Calu3 (cell line): ENCODE measurements at regions of chr3 and their contacts with region 1.

Region 1: GRCh38 chr3:187679638-187680396 is 9.6 kb upstream of the SST start:
- DNase-seq: peak; percentile 90
- H3K4me3 Mint-ChIP-seq: no peak overlapping the region
- H3K27ac Mint-ChIP-seq: peak overlapping the region; percentile 25
- H3K4me1 Mint-ChIP-seq: peaks cover 15% of the 10 kb centered on the region
- H3K27me3 Mint-ChIP-seq: peaks cover 62% of the 10 kb centered on the region
- CTCF ChIP-seq: peak; percentile 98

Region 2: DNA sequence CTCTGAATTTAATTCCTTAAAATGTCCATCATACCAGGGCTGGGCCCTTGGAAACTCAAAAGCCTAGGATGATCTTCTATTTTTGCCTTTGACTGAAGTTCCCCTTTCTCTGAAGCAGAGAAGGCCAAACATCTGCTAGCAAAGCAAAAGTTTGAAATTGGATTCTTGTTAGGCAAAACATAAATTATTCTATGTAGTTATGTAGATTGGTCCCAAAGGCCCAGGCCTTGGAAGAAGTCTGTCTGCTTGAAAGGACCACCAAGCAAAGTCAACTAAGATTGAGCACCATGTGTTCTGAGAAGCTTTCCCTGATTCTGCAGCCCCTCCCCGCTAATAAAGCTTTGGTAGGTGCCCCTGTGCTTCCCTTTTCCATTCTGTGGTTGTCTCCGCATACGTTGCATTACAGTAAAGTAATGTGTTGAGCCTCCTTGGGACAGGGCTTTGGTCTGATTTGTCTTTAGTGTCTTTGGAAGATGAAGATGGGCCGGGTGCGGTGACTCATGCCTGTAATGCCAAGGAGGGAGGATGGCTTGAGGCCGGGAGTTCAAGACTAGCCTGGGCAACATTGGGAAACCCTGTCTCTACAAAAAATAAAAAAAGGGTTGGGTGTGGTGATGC is 597.0 kb before region 1 on chr3:
- CTCF ChIA-PET with region 1: interaction called, 11 read pairs
- intact Hi-C with region 1: no loop called
- DNase-seq: no peak
- H3K4me3 Mint-ChIP-seq: no peak overlapping the region
- H3K27ac Mint-ChIP-seq: no peak overlapping the region
- H3K4me1 Mint-ChIP-seq: peaks cover 6% of the 10 kb centered on the region
- H3K27me3 Mint-ChIP-seq: no peaks in the 10 kb centered on the region
- CTCF ChIP-seq: no peak

Region 3: DNA sequence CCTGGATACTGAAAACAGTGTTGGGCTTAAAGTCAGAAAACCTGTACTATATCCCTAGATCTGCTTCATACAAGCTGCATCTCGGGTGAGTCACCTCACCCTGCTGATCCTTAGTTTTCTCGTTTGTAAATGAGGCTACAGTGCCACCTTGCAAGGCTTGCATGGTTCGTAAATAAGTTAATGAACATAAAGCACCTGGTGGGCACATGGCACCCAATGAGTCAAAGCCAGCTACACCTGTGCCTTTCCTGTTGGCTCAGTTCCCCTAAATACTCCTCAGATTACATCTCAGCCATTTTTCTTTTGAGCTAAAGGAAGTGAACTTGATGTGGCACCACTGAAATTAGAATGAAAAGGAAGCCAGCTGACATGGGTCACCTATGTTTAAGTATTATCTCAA is 456.0 kb before region 1 on chr3:
- CTCF ChIA-PET with region 1: interaction called, 68 read pairs
- intact Hi-C with region 1: loop called (anchors 1 kb)
- DNase-seq: peak; percentile 79
- H3K4me3 Mint-ChIP-seq: no peak overlapping the region
- H3K27ac Mint-ChIP-seq: peak overlapping the region; percentile 65
- H3K4me1 Mint-ChIP-seq: peaks cover 33% of the 10 kb centered on the region
- H3K27me3 Mint-ChIP-seq: peaks cover 5% of the 10 kb centered on the region
- CTCF ChIP-seq: no peak

Region 4: GRCh38 chr3:187368251-187369088 is 311.3 kb before region 1 on chr3 and contains the start of gene RTP4:
- CTCF ChIA-PET with region 1: interaction called, 12 read pairs
- intact Hi-C with region 1: no loop called
- DNase-seq: peak; percentile 41
- H3K4me3 Mint-ChIP-seq: peak within 1 kb of the TSS; percentile 74
- H3K27ac Mint-ChIP-seq: peak within 1 kb of the TSS; percentile 98
- H3K4me1 Mint-ChIP-seq: peaks cover 17% of the 10 kb centered on the region
- H3K27me3 Mint-ChIP-seq: no peaks in the 10 kb centered on the region
- CTCF ChIP-seq: no peak
- total RNA-seq, gene RTP4: 12.3 and 21.8 TPM in 2 replicates

Region 5: GRCh38 chr3:187610981-187611511 is 68.8 kb before region 1 on chr3:
- CTCF ChIA-PET with region 1: interaction called, 39 read pairs
- intact Hi-C with region 1: loop called (anchors 1 kb)
- DNase-seq: no peak
- H3K4me3 Mint-ChIP-seq: no peak overlapping the region
- H3K27ac Mint-ChIP-seq: no peak overlapping the region
- H3K4me1 Mint-ChIP-seq: no peaks in the 10 kb centered on the region
- H3K27me3 Mint-ChIP-seq: peaks cover 52% of the 10 kb centered on the region
- CTCF ChIP-seq: no peak

Region 6: DNA sequence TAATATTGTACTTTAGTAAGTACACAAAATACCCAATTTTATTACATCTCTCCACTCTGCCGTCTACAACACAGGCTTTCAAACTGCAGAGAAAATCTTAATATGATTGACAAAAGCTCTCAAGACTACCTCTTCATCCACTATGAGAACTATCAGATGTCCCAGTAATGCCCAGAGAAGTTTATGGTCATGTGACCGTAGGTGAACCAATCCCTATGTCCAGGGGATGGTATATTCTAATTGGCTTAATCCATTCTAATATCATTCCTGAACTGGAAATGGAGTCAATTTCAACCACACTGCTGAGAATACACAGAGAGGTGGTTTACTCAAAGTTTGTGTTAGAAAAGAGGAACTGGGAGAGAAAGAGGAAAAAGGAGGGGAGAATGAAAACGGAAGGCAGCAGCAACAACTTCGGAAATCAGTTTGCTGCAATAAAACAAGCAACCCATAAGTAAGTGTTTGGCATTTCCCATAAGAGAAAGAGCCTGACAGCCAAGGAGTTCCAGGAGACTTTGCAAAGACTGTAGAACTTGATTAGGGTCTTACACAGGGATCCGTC is 16.9 kb before region 1 on chr3:
- CTCF ChIA-PET with region 1: interaction called, 18 read pairs
- intact Hi-C with region 1: no loop called
- DNase-seq: no peak
- H3K4me3 Mint-ChIP-seq: no peak overlapping the region
- H3K27ac Mint-ChIP-seq: no peak overlapping the region
- H3K4me1 Mint-ChIP-seq: no peaks in the 10 kb centered on the region
- H3K27me3 Mint-ChIP-seq: peaks cover 35% of the 10 kb centered on the region
- CTCF ChIP-seq: no peak

Region 7: GRCh38 chr3:187714404-187714979 is 34.7 kb after region 1 on chr3:
- CTCF ChIA-PET with region 1: interaction called, 17 read pairs
- intact Hi-C with region 1: loop called (anchors 1 kb)
- DNase-seq: peak; percentile 90
- H3K4me3 Mint-ChIP-seq: no peak overlapping the region
- H3K27ac Mint-ChIP-seq: no peak overlapping the region
- H3K4me1 Mint-ChIP-seq: peaks cover 10% of the 10 kb centered on the region
- H3K27me3 Mint-ChIP-seq: peaks cover 24% of the 10 kb centered on the region
- CTCF ChIP-seq: peak; percentile 97

Region 8: GRCh38 chr3:187777331-187777941 is 97.6 kb after region 1 on chr3:
- CTCF ChIA-PET with region 1: no interaction called
- intact Hi-C with region 1: no loop called
- DNase-seq: peak; percentile 15
- H3K4me3 Mint-ChIP-seq: no peak overlapping the region
- H3K27ac Mint-ChIP-seq: peak overlapping the region; percentile 10
- H3K4me1 Mint-ChIP-seq: peaks cover 11% of the 10 kb centered on the region
- H3K27me3 Mint-ChIP-seq: no peaks in the 10 kb centered on the region
- CTCF ChIP-seq: no peak